ENCODE measurements at regions of chr7 and their contacts with region 1.

Region 1: DNA sequence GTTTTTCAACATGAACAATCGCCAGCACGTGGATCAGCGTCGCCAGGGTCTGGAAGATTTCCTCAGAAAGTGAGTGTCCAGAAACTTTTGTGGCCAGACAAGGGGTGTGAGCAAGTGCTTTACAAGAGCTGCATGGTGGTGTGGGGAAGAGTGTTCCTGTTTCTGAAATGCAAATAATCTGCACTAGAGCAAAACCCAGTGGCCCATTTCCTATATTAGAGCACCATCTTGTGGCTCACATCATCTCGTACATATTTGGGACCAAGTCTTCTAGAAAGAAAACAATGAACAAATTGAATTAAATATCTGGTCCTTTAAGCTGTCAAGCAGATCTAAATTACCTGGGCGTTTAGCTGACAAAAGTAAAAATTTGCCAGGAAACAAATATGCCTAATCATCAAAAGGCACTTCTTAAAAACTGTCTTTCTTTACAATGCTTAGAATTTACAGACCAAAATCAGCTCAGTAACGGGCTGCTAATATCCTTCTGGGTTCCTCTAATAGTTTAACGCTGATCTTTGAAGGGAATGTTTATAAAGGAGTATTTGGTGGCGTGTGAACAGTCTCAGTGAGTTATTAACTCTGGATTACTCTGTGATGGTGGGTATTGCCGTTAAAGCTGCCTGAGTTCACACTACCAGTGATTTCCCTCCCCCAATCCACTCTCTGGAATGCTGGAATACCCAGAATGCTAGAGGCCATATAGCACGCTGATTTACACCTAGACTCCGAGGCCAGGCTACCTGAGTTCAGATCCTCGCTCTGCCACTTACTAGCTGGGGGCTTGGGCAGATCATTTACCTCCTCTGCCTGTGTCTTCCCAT is 73.6 kb downstream of the SNX10 start:
- DNase-seq: peak; percentile 88
- H3K4me3 ChIP-seq: no peak overlapping the region
- H3K27ac ChIP-seq: no peak overlapping the region
- H3K4me1 ChIP-seq: peaks cover 15% of the 10 kb centered on the region
- H3K27me3 ChIP-seq: peaks cover 0 to 8% of the 10 kb centered on the region in 2 experiments
- CTCF ChIP-seq: peak; percentile 56 to 60
- POLR2A ChIP-seq: no peak

Region 2: GRCh38 chr7:25894902-25895791 is 470.1 kb before region 1 on chr7:
- CTCF ChIA-PET with region 1: interaction called, 304 read pairs
- POLR2A ChIA-PET with region 1: interaction called, 3 read pairs
- dilution Hi-C with region 1: no loop called
- intact Hi-C with region 1: loop called (anchors 1 kb)
- DNase-seq: peak; percentile 32
- H3K4me3 ChIP-seq: no peak overlapping the region
- H3K27ac ChIP-seq: no peak overlapping the region
- H3K4me1 ChIP-seq: peaks cover 16% of the 10 kb centered on the region
- H3K27me3 ChIP-seq: peaks cover under 1 to 11% of the 10 kb centered on the region in 2 experiments
- CTCF ChIP-seq: peak; percentile 78 to 79
- POLR2A ChIP-seq: no peak

Region 3: GRCh38 chr7:26151953-26152781 is 213.1 kb before region 1 on chr7 and contains the start of gene NFE2L3:
- CTCF ChIA-PET with region 1: interaction called, 3 read pairs
- POLR2A ChIA-PET with region 1: no interaction called
- dilution Hi-C with region 1: no loop called
- intact Hi-C with region 1: loop called (anchors 5 kb)
- DNase-seq: peak; percentile 77
- H3K4me3 ChIP-seq: peak within 1 kb of the TSS; percentile 42 to 71 (median 68)
- H3K27ac ChIP-seq: peak within 1 kb of the TSS; percentile 92
- H3K4me1 ChIP-seq: peaks cover 45% of the 10 kb centered on the region
- H3K27me3 ChIP-seq: peaks cover 0 to 4% of the 10 kb centered on the region in 2 experiments
- CTCF ChIP-seq: peak in 1 of 2 donors; percentile 7
- POLR2A ChIP-seq: peak; percentile 46
- total RNA-seq, gene NFE2L3: 28.4 and 40.2 TPM in 2 replicates

Region 4: GRCh38 chr7:26376175-26376917 is 11.1 kb after region 1 on chr7:
- CTCF ChIA-PET with region 1: interaction called, 16 read pairs
- POLR2A ChIA-PET with region 1: no interaction called
- dilution Hi-C with region 1: no loop called
- intact Hi-C with region 1: no loop called
- DNase-seq: peak; percentile 74
- H3K4me3 ChIP-seq: peak overlapping the region; percentile 70 to 91 (median 76)
- H3K27ac ChIP-seq: peak overlapping the region; percentile 80
- H3K4me1 ChIP-seq: peaks cover 36% of the 10 kb centered on the region
- H3K27me3 ChIP-seq: no peaks in the 10 kb centered on the region
- CTCF ChIP-seq: no peak
- POLR2A ChIP-seq: peak; percentile 51

Region 5: GRCh38 chr7:26449175-26450165 is 84.2 kb after region 1 on chr7:
- CTCF ChIA-PET with region 1: interaction called, 13 read pairs
- POLR2A ChIA-PET with region 1: no interaction called
- dilution Hi-C with region 1: no loop called
- intact Hi-C with region 1: no loop called
- DNase-seq: peak; percentile 96
- H3K4me3 ChIP-seq: no peak overlapping the region
- H3K27ac ChIP-seq: peak overlapping the region; percentile 80
- H3K4me1 ChIP-seq: peaks cover 37% of the 10 kb centered on the region
- H3K27me3 ChIP-seq: no peaks in the 10 kb centered on the region
- CTCF ChIP-seq: no peak
- POLR2A ChIP-seq: peak; percentile 54

Region 6: DNA sequence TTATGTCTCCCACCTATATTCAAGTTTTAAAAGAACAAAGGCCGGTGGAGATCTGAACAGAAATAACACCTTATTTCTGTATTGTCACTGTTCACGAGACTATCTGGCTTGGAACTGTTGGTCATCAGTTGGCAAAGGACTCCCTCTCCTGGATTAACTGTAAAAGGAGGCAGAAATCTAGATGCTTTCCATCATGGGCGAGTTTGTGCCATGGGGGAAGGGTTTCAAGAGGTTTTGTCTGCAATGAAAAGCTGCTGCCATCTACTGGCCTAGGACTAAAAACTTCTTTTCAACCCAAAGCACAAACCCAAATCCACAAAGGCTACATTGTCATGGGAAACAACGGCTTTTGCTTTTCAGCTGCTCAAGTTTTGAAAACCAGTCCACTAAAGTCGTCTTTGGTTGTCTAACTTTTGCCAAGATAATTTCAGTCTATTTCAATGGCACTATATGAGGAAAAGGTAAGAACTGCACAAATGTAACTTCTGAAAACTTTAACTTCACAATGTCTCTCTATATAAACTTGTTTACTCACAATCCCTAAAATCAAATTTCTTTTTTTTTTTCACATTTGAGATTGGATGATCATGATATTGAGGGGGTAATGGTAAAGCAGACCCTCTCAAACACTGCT is 302.3 kb after region 1 on chr7:
- CTCF ChIA-PET with region 1: interaction called, 345 read pairs
- POLR2A ChIA-PET with region 1: interaction called, 13 read pairs
- dilution Hi-C with region 1: no loop called
- intact Hi-C with region 1: loop called (anchors 1 kb)
- DNase-seq: peak; percentile 96
- H3K4me3 ChIP-seq: no peak overlapping the region
- H3K27ac ChIP-seq: no peak overlapping the region
- H3K4me1 ChIP-seq: peaks cover 3% of the 10 kb centered on the region
- H3K27me3 ChIP-seq: no peaks in the 10 kb centered on the region
- CTCF ChIP-seq: peak; percentile 80 to 91
- POLR2A ChIP-seq: no peak

Region 7: GRCh38 chr7:27150568-27151340 is 785.5 kb after region 1 on chr7:
- CTCF ChIA-PET with region 1: interaction called, 72 read pairs
- POLR2A ChIA-PET with region 1: no interaction called
- dilution Hi-C with region 1: no loop called
- intact Hi-C with region 1: no loop called
- DNase-seq: peak; percentile 91
- H3K4me3 ChIP-seq: peak overlapping the region; percentile 54 to 85 (median 55)
- H3K27ac ChIP-seq: peak overlapping the region; percentile 96
- H3K4me1 ChIP-seq: peaks cover 75% of the 10 kb centered on the region
- H3K27me3 ChIP-seq: no peaks in the 10 kb centered on the region
- CTCF ChIP-seq: peak; percentile 81 to 89
- POLR2A ChIP-seq: peak; percentile 86